CD8-positive, alpha-beta T cell (primary cell): ENCODE measurements at regions of chr13 and their contacts with region 1.

Region 1: GRCh38 chr13:41428155-41428554 is 29.2 kb upstream of the RGCC start:
- DNase-seq: peak; percentile 10 to 75 (median 59)
- ATAC-seq: peak; percentile 96
- H3K4me3 ChIP-seq: peak overlapping the region in 1 of 2 experiments; percentile 26
- H3K4me3 Mint-ChIP-seq: peak overlapping the region; percentile 68
- H3K27ac ChIP-seq: no peak overlapping the region
- H3K27ac Mint-ChIP-seq: no peak overlapping the region
- H3K4me1 ChIP-seq: no peaks in the 10 kb centered on the region
- H3K4me1 Mint-ChIP-seq: peaks cover 10% of the 10 kb centered on the region
- H3K27me3 ChIP-seq: no peaks in the 10 kb centered on the region
- H3K27me3 Mint-ChIP-seq: peaks cover 4% of the 10 kb centered on the region
- CTCF ChIP-seq: peak; percentile 54

Region 2: DNA sequence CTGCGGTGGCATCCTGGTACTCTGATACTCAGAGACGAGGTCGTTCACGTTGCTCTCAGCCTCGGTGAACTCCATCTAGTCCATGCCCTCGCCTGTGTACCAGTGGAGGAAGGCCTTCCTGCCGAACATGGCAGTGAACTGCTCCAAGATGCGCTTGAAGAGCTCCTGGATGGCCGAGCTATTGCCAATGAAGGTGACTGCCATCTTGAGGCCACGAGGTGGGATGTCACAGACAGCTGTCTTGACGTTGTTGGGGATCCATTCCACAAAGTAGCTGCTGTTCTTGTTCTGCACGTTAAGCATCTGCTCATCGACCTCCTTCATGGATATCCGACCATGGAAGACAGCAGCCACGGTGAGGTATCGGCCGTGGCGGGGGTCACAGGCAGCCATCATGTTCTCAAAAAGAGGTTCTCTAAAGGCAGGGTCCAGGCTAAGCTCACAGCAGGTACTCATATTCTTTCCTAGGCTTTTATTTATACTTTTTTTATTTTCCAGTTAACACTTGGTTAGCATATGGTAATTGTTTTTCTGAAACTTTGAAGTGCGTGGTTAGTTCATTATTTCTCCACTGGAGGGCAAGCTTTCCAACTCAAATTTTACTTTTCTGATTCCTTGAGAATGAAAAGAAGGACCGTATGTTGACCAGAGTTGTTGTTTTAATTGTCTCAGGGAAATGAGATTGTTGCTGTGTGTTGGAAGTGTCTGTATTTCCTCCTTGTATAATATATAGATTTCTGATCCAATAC is 43.2 kb before region 1 on chr13:
- CTCF ChIA-PET with region 1: no interaction called
- POLR2A ChIA-PET with region 1: no interaction called
- intact Hi-C with region 1: no loop called
- DNase-seq: peak in 1 of 9 experiments; percentile 14
- ATAC-seq: no peak
- H3K4me3 ChIP-seq: no peak overlapping the region
- H3K4me3 Mint-ChIP-seq: no peak overlapping the region
- H3K27ac ChIP-seq: no peak overlapping the region
- H3K27ac Mint-ChIP-seq: peak overlapping the region; percentile 33
- H3K4me1 ChIP-seq: peaks cover 8% of the 10 kb centered on the region
- H3K4me1 Mint-ChIP-seq: peaks cover 27% of the 10 kb centered on the region
- H3K27me3 ChIP-seq: no peaks in the 10 kb centered on the region
- H3K27me3 Mint-ChIP-seq: no peaks in the 10 kb centered on the region
- CTCF ChIP-seq: peak; percentile 19

Region 3: DNA sequence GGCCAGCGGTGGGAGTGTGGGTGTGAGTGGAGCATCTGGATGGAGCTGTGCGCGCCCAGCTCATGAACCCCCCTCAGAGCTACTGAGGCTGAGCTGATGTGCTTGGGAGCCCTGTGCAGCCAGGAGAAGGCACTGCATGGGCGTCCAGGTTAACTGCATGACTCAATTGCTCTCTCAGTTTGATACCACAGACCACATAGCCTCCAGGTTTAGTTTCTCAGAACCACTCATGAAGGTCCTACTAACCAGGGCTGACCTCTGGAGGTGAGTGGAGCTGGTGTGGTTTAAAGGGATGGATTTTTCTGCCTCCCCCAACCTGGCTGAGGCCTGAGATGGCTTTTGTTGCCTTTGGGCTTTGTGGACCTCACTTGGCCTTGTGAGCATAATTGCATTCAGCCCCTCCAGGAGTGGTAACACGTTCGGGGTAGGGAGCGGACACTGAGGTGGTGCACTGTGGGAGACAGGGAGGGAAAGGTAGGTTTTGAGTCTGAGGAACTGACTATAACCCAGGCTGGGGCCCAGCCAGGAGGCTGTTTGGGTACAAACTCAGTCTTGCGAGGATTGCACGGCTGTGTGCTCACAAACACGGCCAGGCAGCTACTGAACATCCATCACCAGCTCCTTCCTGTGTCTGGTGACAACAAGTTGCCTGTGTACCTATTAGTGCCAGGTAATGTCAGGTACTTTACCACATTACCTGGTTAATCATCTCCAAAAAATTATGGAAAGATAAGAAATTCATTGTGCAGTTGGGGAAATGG is 126.7 kb after region 1 on chr13:
- CTCF ChIA-PET with region 1: no interaction called
- POLR2A ChIA-PET with region 1: no interaction called
- intact Hi-C with region 1: no loop called
- DNase-seq: no peak
- ATAC-seq: no peak
- H3K4me3 ChIP-seq: no peak overlapping the region
- H3K4me3 Mint-ChIP-seq: no peak overlapping the region
- H3K27ac ChIP-seq: no peak overlapping the region
- H3K27ac Mint-ChIP-seq: no peak overlapping the region
- H3K4me1 ChIP-seq: no peaks in the 10 kb centered on the region
- H3K4me1 Mint-ChIP-seq: peaks cover 3% of the 10 kb centered on the region
- H3K27me3 ChIP-seq: no peaks in the 10 kb centered on the region
- H3K27me3 Mint-ChIP-seq: no peaks in the 10 kb centered on the region
- CTCF ChIP-seq: no peak

Region 4: GRCh38 chr13:41588899-41589298 is 160.7 kb after region 1 on chr13:
- CTCF ChIA-PET with region 1: no interaction called
- POLR2A ChIA-PET with region 1: no interaction called
- intact Hi-C with region 1: loop called (anchors 1 kb)
- DNase-seq: peak in 1 of 9 experiments; percentile 12
- ATAC-seq: no peak
- H3K4me3 ChIP-seq: no peak overlapping the region
- H3K4me3 Mint-ChIP-seq: no peak overlapping the region
- H3K27ac ChIP-seq: no peak overlapping the region
- H3K27ac Mint-ChIP-seq: no peak overlapping the region
- H3K4me1 ChIP-seq: no peaks in the 10 kb centered on the region
- H3K4me1 Mint-ChIP-seq: peaks cover 4% of the 10 kb centered on the region
- H3K27me3 ChIP-seq: no peaks in the 10 kb centered on the region
- H3K27me3 Mint-ChIP-seq: no peaks in the 10 kb centered on the region
- CTCF ChIP-seq: no peak

Region 5: DNA sequence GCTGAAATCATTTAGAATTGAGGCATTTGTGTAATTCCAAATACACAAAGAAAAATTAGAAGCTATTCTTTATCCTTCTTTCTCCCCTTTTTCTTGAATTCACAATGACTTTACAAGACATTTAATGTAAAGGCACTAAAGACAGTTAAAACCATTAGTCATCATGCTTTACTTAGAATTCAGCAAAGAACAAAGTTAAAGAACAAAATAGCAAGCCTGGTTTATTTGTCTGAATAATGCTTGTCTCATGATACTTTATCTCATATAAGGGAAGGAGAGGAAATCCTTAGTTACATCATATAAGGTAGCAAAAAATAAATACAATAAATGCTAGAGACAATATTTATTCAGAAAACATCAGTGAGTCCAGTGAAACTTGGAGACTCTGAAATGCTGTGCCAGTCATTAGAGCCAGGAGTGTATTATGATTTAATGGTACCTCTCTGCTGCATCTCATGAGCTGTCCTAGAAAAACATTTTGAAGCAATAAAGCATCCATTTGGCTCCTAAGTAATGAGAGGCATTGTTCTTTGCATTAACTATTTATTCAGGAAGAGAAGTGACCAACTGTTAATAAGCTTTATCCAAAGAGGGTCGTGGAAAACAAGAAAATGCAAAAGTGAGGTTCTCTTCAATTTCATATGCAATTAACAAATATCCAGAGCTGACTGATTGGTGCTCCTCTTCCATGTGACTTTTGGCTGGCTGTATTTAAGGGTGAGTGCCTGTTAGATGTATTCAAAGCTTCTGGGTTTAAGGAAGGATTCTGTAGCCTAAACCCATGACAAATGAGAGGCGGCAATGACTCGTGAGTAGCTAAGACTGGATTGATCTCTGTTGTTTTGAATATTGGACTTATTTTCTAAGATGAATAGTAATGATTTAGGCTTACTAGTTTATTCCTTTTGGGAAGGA is 725.3 kb after region 1 on chr13:
- CTCF ChIA-PET with region 1: no interaction called
- POLR2A ChIA-PET with region 1: no interaction called
- intact Hi-C with region 1: loop called in 1 of 2 experiments (anchors 5 kb)
- DNase-seq: no peak
- ATAC-seq: no peak
- H3K4me3 ChIP-seq: no peak overlapping the region
- H3K4me3 Mint-ChIP-seq: no peak overlapping the region
- H3K27ac ChIP-seq: no peak overlapping the region
- H3K27ac Mint-ChIP-seq: no peak overlapping the region
- H3K4me1 ChIP-seq: no peaks in the 10 kb centered on the region
- H3K4me1 Mint-ChIP-seq: peaks cover 11% of the 10 kb centered on the region
- H3K27me3 ChIP-seq: no peaks in the 10 kb centered on the region
- H3K27me3 Mint-ChIP-seq: no peaks in the 10 kb centered on the region
- CTCF ChIP-seq: no peak